A549 (cell line): ENCODE measurements at regions of chr1 and their contacts with region 1.

Region 1: DNA sequence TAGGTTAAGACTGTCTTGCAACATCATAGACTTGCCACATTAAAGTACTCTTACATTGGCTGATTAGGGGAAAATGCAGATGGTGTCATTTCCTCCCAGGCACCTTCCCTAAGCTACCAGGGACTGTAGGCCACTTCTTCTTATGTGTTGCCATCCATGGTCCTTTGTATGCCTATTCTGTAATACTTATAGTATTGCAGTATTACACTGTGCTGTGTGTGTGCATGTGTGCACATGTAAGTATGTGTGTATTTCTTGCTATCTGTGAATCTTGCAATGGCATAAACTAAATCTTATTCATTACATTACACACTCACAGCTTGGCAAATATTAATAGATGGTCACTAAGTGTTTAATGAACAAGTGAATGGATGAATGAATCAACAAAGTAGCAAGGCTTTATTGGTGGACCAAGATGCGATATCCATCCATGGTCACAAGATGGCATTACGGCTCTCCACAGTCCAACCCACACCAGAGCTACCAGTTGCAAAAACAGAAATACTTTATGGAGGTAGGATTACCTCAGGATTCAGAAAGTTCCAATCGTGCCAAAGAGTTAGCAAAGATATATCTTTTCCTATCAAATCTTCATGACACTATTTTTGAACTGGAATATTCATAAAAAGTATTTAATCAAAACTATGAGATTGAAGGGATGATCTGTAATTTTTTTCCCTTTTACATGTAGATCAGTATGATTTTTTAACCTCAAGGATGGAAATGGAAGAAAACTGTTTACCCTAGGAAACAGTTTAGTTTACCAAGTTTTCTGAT is 160.2 kb downstream of the DENND1B start:
- DNase-seq: peak in 1 of 2 experiments; percentile 59
- ATAC-seq: peak; percentile 95 to 96
- H3K4me3 ChIP-seq: no peak overlapping the region
- H3K27ac ChIP-seq: no peak overlapping the region
- H3K4me1 ChIP-seq: peaks cover 4% of the 10 kb centered on the region; the same call in 1 of the 3 replicates
- CTCF ChIP-seq: peak; percentile 75
- EP300 ChIP-seq: no peak
- POLR2A ChIP-seq: no peak
- RAD21 ChIP-seq: peak; percentile 75 to 79

Region 2: GRCh38 chr1:197725044-197725443 is 109.9 kb after region 1 on chr1:
- CTCF ChIA-PET with region 1: no interaction called
- POLR2A ChIA-PET with region 1: no interaction called
- DNase-seq: peak in 1 of 2 experiments; percentile 56
- ATAC-seq: no peak
- H3K4me3 ChIP-seq: no peak overlapping the region
- H3K27ac ChIP-seq: no peak overlapping the region
- H3K4me1 ChIP-seq: no peaks in the 10 kb centered on the region
- CTCF ChIP-seq: no peak
- EP300 ChIP-seq: no peak
- POLR2A ChIP-seq: no peak
- RAD21 ChIP-seq: no peak

Region 3: DNA sequence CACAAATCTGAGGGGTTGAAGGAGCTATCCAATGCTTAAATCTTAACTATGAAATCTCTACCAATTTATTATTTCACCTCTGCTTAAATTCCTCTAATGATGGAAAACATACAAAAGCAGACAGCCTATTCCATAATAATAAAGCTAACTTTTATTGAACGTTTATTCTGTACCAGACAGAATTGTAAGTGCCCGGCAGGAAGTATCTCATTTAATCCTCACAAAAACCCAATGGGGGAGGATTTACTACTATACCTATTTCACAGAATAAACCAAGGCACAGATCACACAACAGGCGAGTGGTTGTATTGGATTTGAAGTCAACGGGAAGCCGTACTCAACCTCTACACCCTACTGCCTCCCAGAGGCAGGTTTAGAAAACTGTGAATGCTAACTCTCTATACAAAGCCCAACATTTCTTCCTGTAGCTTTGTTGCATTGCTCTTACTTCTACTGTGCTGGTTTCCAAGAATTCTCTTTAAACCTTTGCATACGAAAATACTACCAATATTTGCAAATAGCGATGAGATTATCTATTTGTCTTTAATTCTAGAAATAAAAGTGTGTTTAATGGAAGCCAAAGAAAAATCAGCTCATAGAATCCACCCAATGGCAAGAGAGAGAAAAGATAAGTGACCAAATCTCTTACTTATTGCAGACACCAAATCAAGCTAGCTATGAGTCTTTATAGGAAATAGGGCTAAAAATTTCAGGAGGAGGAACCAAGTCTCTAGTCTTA is 253.8 kb after region 1 on chr1:
- CTCF ChIA-PET with region 1: interaction called, 26 read pairs
- POLR2A ChIA-PET with region 1: no interaction called
- DNase-seq: peak; percentile 40 to 68
- ATAC-seq: peak; percentile 98
- H3K4me3 ChIP-seq: no peak overlapping the region
- H3K27ac ChIP-seq: no peak overlapping the region
- H3K4me1 ChIP-seq: no peaks in the 10 kb centered on the region
- CTCF ChIP-seq: peak; percentile 64
- EP300 ChIP-seq: no peak
- POLR2A ChIP-seq: no peak
- RAD21 ChIP-seq: peak; percentile 83 to 86

Region 4: DNA sequence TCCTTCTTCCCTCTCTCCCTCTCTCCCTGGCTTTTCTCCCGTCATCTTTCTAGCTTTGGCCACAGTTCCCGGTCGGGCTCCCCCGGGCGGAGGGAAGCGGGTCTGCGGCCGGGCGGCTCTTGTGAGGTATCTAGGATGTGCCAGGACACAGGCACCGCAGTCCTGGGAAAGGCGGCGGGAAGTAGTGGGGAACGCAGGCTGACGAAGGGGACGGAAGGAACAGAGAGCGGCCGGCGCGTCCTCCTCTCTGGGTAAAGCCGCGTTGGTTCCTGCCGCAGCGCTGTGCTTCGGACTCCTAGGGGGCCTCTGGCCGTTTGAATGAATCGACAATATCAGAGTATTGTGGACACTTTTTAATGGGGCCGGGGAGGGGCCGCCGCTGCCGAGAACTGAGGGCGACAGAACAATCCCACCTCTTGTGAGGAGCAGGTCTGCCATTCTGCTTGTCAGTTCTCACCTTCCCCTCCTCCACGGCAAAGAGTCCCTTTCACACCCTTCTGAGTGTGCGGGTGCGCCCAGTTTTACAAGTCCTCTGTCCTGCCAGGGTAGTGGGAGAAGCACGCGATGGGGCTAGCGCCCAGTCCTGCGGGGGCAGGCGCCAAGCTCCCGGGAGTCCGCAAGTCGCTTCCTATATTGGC is 300.9 kb after region 1 on chr1:
- CTCF ChIA-PET with region 1: interaction called, 18 read pairs
- POLR2A ChIA-PET with region 1: no interaction called
- DNase-seq: peak; percentile 82 to 85
- ATAC-seq: peak; percentile 79 to 92
- H3K4me3 ChIP-seq: peak overlapping the region; percentile 54
- H3K27ac ChIP-seq: peak overlapping the region; percentile 60 to 83; a peak in 5 of 6 replicates
- H3K4me1 ChIP-seq: peaks cover 14% of the 10 kb centered on the region; the same call in 2 of the 3 replicates
- CTCF ChIP-seq: peak; percentile 58
- EP300 ChIP-seq: no peak
- POLR2A ChIP-seq: no peak
- RAD21 ChIP-seq: peak; percentile 42 to 53

Region 5: GRCh38 chr1:197924516-197925123 is 309.5 kb after region 1 on chr1:
- CTCF ChIA-PET with region 1: interaction called, 11 read pairs
- POLR2A ChIA-PET with region 1: no interaction called
- DNase-seq: peak; percentile 65 to 75
- ATAC-seq: peak; percentile 84 to 91; a peak in 5 of 6 replicates
- H3K4me3 ChIP-seq: no peak overlapping the region
- H3K27ac ChIP-seq: no peak overlapping the region
- H3K4me1 ChIP-seq: peaks cover 3% of the 10 kb centered on the region; the same call in 1 of the 3 replicates
- CTCF ChIP-seq: peak; percentile 89
- EP300 ChIP-seq: no peak
- POLR2A ChIP-seq: no peak
- RAD21 ChIP-seq: peak; percentile 81 to 89